ENCODE measurements at regions of chr3 and their contacts with region 1.

Region 1: GRCh38 chr3:10322352-10322710 is 1.4 kb upstream of the SEC13 start:
- DNase-seq: peak; percentile 59 to 76 (median 72)
- ATAC-seq: peak; percentile 76
- H3K4me3 ChIP-seq: no peak overlapping the region
- H3K27ac ChIP-seq: no peak overlapping the region; the same call in 2 of the 3 replicates
- H3K4me1 ChIP-seq: peaks cover 5% of the 10 kb centered on the region in 2 experiments; a peak in 3 of 5 replicates
- H3K27me3 ChIP-seq: peaks cover 18 to 30% of the 10 kb centered on the region in 2 experiments; a peak in 4 of 5 replicates
- CTCF ChIP-seq: peak; percentile 70 to 77 (median 71); a peak in 5 of 6 replicates
- EP300 ChIP-seq: no peak
- POLR2A ChIP-seq: no peak
- RAD21 ChIP-seq: peak; percentile 36 to 74

Region 2: GRCh38 chr3:9731206-9732079 is 590.9 kb before region 1 on chr3 and contains the start of gene BRPF1:
- CTCF ChIA-PET with region 1: no interaction called
- POLR2A ChIA-PET with region 1: interaction called, 6 read pairs
- in situ Hi-C with region 1: no loop called
- intact Hi-C with region 1: loop called (anchors 10 kb)
- DNase-seq: peak; percentile 99 to 100 (median 100)
- ATAC-seq: peak; percentile 97
- H3K4me3 ChIP-seq: peak within 1 kb of the TSS; percentile 93
- H3K27ac ChIP-seq: peak within 1 kb of the TSS; percentile 100
- H3K4me1 ChIP-seq: peaks cover 34 to 36% of the 10 kb centered on the region in 2 experiments
- H3K27me3 ChIP-seq: no peaks in the 10 kb centered on the region
- CTCF ChIP-seq: peak in 1 of 3 experiments; percentile 3; a peak in 1 of 6 replicates
- EP300 ChIP-seq: peak; percentile 99
- POLR2A ChIP-seq: peak; percentile 87
- RAD21 ChIP-seq: 0 out of 4 replicates have a peak, but pooled peaks of 1 of the 2 experiments have one; percentile 11
- polyA plus RNA-seq, gene BRPF1: 1.1 to 1.4 TPM

Region 3: GRCh38 chr3:10026084-10026890 is 296.0 kb before region 1 on chr3 and contains the start of gene FANCD2:
- CTCF ChIA-PET with region 1: no interaction called
- POLR2A ChIA-PET with region 1: no interaction called
- in situ Hi-C with region 1: no loop called
- intact Hi-C with region 1: loop called (anchors 5 kb)
- DNase-seq: peak; percentile 86 to 96 (median 88)
- ATAC-seq: peak; percentile 92
- H3K4me3 ChIP-seq: peak within 1 kb of the TSS; percentile 81
- H3K27ac ChIP-seq: peak within 1 kb of the TSS; percentile 86
- H3K4me1 ChIP-seq: peaks cover 10 to 13% of the 10 kb centered on the region in 2 experiments; a peak in 4 of 5 replicates
- H3K27me3 ChIP-seq: no peaks in the 10 kb centered on the region; a peak in 1 of 5 replicates
- CTCF ChIP-seq: no peak
- EP300 ChIP-seq: peak; percentile 58
- POLR2A ChIP-seq: peak; percentile 88
- RAD21 ChIP-seq: peak in 1 of 2 experiments; percentile 23; a peak in 2 of 4 replicates
- polyA plus RNA-seq, gene FANCD2: 86.6 to 105 TPM

Region 4: DNA sequence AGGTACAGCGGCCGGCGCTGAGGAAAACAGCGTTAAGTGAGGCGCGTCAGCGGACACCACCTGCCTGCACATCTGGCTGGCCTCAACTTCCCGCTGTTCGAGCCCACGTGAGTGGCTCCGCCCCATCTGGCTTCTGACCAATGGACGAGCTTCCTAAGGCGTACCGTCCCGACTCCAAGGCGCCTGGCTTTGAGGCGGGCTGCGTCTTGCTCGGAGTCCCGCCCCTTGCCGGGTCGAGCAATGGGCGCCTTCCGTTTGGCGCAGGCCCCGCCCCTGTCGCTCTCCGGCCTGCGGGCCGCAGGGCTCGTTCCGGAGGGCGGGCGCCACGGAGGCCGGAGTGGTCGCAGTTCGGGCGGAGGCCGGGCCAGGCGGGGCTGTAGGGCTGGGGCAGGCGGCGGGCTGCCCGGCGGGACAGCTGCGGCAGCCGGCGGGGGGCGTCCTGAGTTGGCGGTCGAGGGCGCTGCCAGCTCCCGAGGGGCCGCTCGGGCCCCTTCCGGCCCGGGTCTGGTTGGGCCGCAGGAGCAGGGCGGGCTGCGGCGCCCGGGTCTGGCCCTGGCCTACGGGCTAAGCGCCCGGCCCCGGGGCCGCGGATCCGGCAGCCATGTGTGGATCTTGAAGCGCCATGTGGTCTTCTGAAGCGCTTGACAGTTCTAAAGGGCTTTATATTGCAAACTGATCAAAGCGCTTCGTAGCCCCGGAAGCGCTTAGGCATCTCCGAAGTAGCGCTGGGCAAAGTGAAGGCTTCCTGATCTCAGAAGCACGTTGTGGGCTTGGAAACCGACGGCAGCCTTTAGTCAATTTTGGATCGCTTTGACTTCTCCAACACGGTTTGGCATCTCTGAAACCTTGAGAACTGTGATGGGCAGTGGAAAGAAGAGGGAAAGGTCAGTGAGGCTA is 73.9 kb before region 1 on chr3 and contains the start of gene TATDN2:
- CTCF ChIA-PET with region 1: no interaction called
- POLR2A ChIA-PET with region 1: no interaction called
- in situ Hi-C with region 1: no loop called
- intact Hi-C with region 1: loop called (anchors 2 kb)
- DNase-seq: peak; percentile 99 to 100 (median 100)
- ATAC-seq: peak; percentile 99
- H3K4me3 ChIP-seq: peak within 1 kb of the TSS; percentile 81
- H3K27ac ChIP-seq: peak within 1 kb of the TSS; percentile 86
- H3K4me1 ChIP-seq: peaks cover 10 to 21% of the 10 kb centered on the region in 2 experiments
- H3K27me3 ChIP-seq: no peaks in the 10 kb centered on the region
- CTCF ChIP-seq: peak in 1 of 3 experiments; percentile 31; a peak in 2 of 6 replicates
- EP300 ChIP-seq: no peak
- POLR2A ChIP-seq: peak; percentile 60
- RAD21 ChIP-seq: peak; percentile 5 to 16; a peak in 1 of 4 replicates
- polyA plus RNA-seq, gene TATDN2: 5.2 to 7.9 TPM

Region 5: DNA sequence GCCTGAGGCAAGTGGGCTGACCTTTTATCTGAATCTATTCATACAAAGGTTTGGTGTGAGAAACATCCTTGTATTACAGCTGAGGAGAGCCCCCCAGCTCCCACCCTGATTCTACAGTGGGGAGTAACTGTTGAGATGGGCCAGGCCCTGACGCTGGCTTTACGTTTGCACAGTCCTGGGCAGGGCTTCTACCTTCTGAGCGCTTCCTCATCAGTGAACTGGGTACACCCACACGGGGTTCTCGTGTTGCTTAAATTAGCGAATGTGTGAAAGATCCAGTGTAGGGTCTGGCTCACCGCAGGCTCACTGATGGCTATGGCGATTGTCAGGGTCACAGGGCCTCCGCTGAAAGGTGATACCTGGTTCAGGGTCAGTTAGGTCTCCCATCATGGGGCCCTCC is 22.2 kb before region 1 on chr3:
- CTCF ChIA-PET with region 1: no interaction called
- POLR2A ChIA-PET with region 1: interaction called, 39 read pairs
- in situ Hi-C with region 1: no loop called
- intact Hi-C with region 1: no loop called
- DNase-seq: no peak
- ATAC-seq: no peak
- H3K4me3 ChIP-seq: no peak overlapping the region
- H3K27ac ChIP-seq: no peak overlapping the region
- H3K4me1 ChIP-seq: no peaks in the 10 kb centered on the region
- H3K27me3 ChIP-seq: no peaks in the 10 kb centered on the region
- CTCF ChIP-seq: no peak
- EP300 ChIP-seq: no peak
- POLR2A ChIP-seq: peak; percentile 55; the same call in 1 of the 2 replicates
- RAD21 ChIP-seq: no peak

Region 6: DNA sequence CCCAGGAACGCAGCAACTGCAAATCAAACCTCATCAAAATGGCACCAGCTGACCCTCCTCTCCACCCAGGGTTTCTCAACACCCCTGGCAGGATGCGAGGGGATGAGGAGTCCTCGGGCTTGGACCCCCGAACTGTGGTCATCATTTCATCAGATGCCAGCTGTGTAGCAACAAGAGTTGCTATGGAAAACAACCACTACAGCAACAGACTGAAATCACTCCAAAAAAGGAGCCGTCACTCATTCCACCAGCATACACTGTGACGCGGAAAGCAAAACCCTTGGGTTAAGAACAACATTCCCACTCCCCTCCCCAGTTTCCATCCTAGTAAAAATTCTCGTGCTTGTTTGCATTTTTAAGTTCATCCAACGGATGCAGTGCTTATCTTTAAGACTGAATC is 1281.3 kb after region 1 on chr3:
- CTCF ChIA-PET with region 1: no interaction called
- POLR2A ChIA-PET with region 1: no interaction called
- in situ Hi-C with region 1: no loop called
- intact Hi-C with region 1: no loop called
- DNase-seq: no peak
- ATAC-seq: no peak
- H3K4me3 ChIP-seq: no peak overlapping the region
- H3K27ac ChIP-seq: no peak overlapping the region
- H3K4me1 ChIP-seq: peaks cover 8 to 13% of the 10 kb centered on the region in 2 experiments; a peak in 4 of 5 replicates
- H3K27me3 ChIP-seq: no peaks in the 10 kb centered on the region
- CTCF ChIP-seq: no peak
- EP300 ChIP-seq: no peak
- POLR2A ChIP-seq: no peak
- RAD21 ChIP-seq: no peak

Measured in K562 (cell line).